Panc1 (cell line): ENCODE measurements at regions of chr12 and their contacts with region 1.

Region 1: DNA sequence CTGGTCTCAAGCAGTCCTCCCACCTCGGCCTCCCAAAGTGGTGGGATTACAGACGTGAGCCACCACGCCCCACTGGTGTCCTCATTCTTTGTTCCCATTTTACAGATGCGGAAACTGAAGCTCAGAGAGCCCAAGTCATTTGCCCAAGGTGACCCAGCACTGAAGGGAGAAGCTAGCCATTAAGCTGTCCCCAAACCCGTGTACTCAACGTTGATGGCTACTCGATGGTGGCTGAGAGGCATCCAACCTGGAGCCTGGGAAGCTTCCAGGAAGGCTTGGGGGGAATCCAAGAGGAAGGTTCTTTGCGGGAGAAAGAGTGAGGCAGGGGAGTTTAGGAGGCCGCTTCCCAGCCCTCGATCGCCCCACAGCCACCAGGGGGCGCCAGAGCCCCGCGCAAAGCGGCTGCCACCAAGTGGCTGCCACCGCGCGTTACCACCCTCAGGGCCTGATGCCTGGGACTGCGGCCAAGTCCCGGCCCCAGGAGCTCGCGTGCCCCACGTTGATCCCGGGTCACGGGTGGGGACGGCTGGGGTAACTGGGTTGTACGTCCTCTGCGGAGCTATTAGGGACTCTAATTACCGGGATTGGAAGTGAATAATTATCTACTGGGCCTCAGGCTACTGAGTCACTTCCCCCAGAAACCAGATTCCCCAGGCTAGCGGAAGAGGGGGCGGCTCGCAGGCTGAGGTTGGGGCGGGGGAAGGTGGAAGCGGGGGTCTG is 8.8 kb upstream of the SH2B3 start:
- DNase-seq: peak; percentile 56
- ATAC-seq: peak; percentile 91
- H3K4me3 ChIP-seq: peak overlapping the region; percentile 24 to 50
- H3K27ac ChIP-seq: peak overlapping the region; percentile 82
- H3K4me1 ChIP-seq: peaks cover 16% of the 10 kb centered on the region
- H3K27me3 ChIP-seq: no peaks in the 10 kb centered on the region
- CTCF ChIP-seq: peak; percentile 99

Region 2: GRCh38 chr12:111276146-111276545 is 120.7 kb before region 1 on chr12:
- CTCF ChIA-PET with region 1: no interaction called
- POLR2A ChIA-PET with region 1: interaction called, 10 read pairs
- in situ Hi-C with region 1: no loop called
- intact Hi-C with region 1: no loop called
- DNase-seq: no peak
- ATAC-seq: no peak
- H3K4me3 ChIP-seq: no peak overlapping the region
- H3K27ac ChIP-seq: no peak overlapping the region
- H3K4me1 ChIP-seq: no peaks in the 10 kb centered on the region; the same call in 1 of the 2 replicates
- H3K27me3 ChIP-seq: peaks cover 6% of the 10 kb centered on the region; the same call in 1 of the 2 replicates
- CTCF ChIP-seq: no peak

Region 3: GRCh38 chr12:111322336-111323250 is 74.3 kb before region 1 on chr12:
- CTCF ChIA-PET with region 1: interaction called, 12 read pairs
- POLR2A ChIA-PET with region 1: no interaction called
- in situ Hi-C with region 1: no loop called
- intact Hi-C with region 1: no loop called
- DNase-seq: no peak
- ATAC-seq: peak; percentile 47
- H3K4me3 ChIP-seq: no peak overlapping the region
- H3K27ac ChIP-seq: no peak overlapping the region
- H3K4me1 ChIP-seq: 0 out of 2 replicates have a peak, but pooled peaks cover 3% of the 10 kb centered on the region
- H3K27me3 ChIP-seq: no peaks in the 10 kb centered on the region
- CTCF ChIP-seq: no peak

Region 4: GRCh38 chr12:111451649-111452129 is 54.8 kb after region 1 on chr12:
- CTCF ChIA-PET with region 1: interaction called, 18 read pairs
- POLR2A ChIA-PET with region 1: no interaction called
- in situ Hi-C with region 1: no loop called
- intact Hi-C with region 1: loop called (anchors 1 kb)
- DNase-seq: peak; percentile 35
- ATAC-seq: no peak
- H3K4me3 ChIP-seq: no peak overlapping the region
- H3K27ac ChIP-seq: no peak overlapping the region
- H3K4me1 ChIP-seq: peaks cover 25% of the 10 kb centered on the region
- H3K27me3 ChIP-seq: no peaks in the 10 kb centered on the region
- CTCF ChIP-seq: peak; percentile 84

Region 5: GRCh38 chr12:111557271-111558106 is 160.6 kb after region 1 on chr12:
- CTCF ChIA-PET with region 1: interaction called, 15 read pairs
- POLR2A ChIA-PET with region 1: no interaction called
- in situ Hi-C with region 1: no loop called
- intact Hi-C with region 1: no loop called
- DNase-seq: no peak
- ATAC-seq: 0 out of 2 replicates have a peak, but pooled peaks have one; percentile 46
- H3K4me3 ChIP-seq: no peak overlapping the region
- H3K27ac ChIP-seq: no peak overlapping the region
- H3K4me1 ChIP-seq: peaks cover 28% of the 10 kb centered on the region
- H3K27me3 ChIP-seq: no peaks in the 10 kb centered on the region
- CTCF ChIP-seq: no peak